Naive thymus-derived CD8-positive, alpha-beta T cell (primary cell): ENCODE measurements at regions of chr16 and their contacts with region 1.

Region 1: GRCh38 chr16:31507929-31508705 is at the start of gene RUSF1:
- DNase-seq: peak; percentile 67 to 89 (median 78)
- ATAC-seq: peak; percentile 89 to 93
- H3K4me3 Mint-ChIP-seq: peak within 1 kb of the TSS; percentile 90 to 97 (median 92)
- H3K27ac Mint-ChIP-seq: peak within 1 kb of the TSS; percentile 93 to 98 (median 98)
- H3K4me1 Mint-ChIP-seq: peaks cover 25 to 66% (median 57%) of the 10 kb centered on the region in 4 donors
- H3K27me3 Mint-ChIP-seq: no peaks in the 10 kb centered on the region
- polyA plus RNA-seq, gene RUSF1: 15.3 to 28.6 (median 22.3) TPM

Region 2: DNA sequence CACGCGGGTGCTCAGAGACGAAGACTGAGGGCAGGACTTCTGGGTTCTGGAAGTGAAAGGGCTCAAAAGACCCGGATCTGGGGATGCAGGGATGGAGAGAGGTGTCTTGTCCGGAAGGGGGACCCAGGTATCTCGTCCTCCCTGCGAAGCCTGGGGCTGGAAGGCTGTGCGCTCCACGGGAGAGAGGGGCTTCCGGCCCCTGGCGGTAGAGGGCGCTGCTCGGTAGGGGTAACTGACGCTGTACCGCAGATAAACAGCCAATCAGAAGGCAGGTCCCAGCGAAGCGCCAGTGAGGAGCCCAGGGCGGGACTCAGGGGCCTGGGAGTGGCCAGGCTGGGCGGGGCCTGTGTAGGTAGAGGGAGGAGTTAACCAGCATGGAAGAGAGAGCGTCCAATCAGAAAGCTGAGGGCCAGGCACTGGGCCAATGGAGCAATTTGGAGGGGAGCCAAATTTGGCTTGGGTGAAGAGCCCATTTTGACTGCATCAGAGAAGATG is 35.4 kb before region 1 on chr16:
- POLR2A ChIA-PET with region 1: interaction called, 24 read pairs
- DNase-seq: peak in 5 of 10 donors; percentile 20 to 63 (median 33)
- ATAC-seq: peak in 1 of 2 donors; percentile 38
- H3K4me3 Mint-ChIP-seq: peak overlapping the region in 9 of 10 donors; percentile 62 to 81 (median 77)
- H3K27ac Mint-ChIP-seq: peak overlapping the region in 3 of 10 donors; percentile 9 to 71 (median 61)
- H3K4me1 Mint-ChIP-seq: peaks cover 12 to 36% (median 25%) of the 10 kb centered on the region in 4 donors
- H3K27me3 Mint-ChIP-seq: peaks cover 1 to 19% (median 10%) of the 10 kb centered on the region in 5 donors

Region 3: DNA sequence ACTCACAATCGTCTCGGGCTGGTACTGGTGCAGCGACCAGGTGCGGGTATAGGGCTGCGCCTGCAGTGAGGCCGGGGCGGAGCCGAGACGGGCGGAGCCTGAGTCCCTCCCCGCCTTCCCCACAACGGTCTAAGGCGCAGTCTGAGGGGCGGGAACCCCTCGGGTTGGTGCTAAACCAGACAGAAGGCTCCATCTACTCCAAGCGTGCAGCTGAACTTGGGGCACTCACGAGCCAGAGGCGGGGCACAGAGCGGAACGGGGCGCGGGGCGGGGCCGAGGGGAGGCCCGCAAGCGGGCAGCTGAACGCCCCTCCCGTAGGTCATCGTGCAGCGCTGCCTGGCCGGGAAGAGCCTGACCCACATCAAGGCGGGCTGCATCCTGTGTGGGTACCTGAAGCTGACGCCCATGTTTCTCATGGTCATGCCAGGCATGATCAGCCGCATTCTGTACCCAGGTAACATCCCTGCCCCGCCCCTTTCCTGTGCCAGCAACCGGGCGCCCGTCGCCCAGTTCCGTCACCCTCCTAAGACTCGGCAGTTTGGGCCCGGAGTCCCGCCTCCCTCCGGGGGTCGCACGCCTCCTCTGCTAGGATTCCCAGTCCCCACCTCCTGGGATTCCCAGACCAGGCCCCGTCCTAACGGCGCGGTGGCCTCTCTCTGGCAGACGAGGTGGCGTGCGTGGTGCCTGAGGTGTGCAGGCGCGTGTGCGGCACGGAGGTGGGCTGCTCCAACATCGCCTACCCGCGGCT is 20.2 kb before region 1 on chr16:
- POLR2A ChIA-PET with region 1: interaction called, 23 read pairs
- DNase-seq: peak; percentile 53 to 88 (median 76)
- ATAC-seq: peak; percentile 88 to 90
- H3K4me3 Mint-ChIP-seq: peak overlapping the region; percentile 88 to 95 (median 92)
- H3K27ac Mint-ChIP-seq: peak overlapping the region; percentile 46 to 90 (median 86)
- H3K4me1 Mint-ChIP-seq: peaks cover 2 to 24% (median 18%) of the 10 kb centered on the region in 4 donors
- H3K27me3 Mint-ChIP-seq: no peaks in the 10 kb centered on the region

Region 4: DNA sequence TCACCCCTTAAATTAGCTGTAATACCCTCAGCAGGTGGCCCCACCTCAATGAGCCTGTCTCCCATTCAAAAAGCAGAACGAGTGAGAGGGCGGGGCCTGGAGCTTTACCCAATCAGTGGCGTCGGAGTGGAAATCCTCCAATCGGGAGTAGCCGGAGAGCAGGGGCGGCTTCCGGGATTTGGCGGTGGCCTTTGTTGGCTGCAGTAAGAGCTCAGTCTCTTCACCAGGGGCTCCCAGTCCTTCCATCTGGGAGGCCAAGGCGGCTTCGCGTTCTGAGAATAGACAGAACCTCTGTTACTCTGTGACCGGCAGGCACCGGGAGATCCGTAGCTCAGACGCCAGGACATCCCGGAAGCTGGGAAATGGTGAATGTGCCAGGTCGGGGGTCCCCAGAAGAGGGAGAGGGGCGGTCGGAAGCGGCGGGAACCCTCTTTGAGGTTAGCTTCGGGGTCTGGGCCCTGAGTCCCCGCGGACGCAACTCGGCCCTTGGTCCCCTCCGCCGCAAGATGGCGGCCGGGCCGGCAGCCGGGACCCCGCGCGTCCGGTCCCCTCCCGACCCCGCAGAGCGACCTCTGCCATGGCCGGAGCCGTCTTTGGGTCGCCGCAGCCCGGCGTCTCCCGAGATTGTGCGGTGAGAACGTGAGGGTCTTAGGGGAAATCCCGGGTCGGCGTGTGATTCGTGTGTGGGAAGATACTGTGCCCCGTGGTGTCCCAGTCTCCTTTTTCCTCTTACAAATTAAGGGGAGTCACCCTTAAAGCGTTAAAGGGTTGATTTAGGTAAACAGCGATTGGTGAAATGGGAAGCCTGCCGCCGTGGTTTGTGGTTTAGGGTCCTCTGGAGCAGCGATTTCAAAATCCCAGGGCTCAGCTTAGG is 205.2 kb after region 1 on chr16:
- POLR2A ChIA-PET with region 1: interaction called, 11 read pairs
- DNase-seq: peak; percentile 76 to 95 (median 90)
- ATAC-seq: peak; percentile 86 to 92
- H3K4me3 Mint-ChIP-seq: peak overlapping the region; percentile 98 to 100 (median 99)
- H3K27ac Mint-ChIP-seq: peak overlapping the region; percentile 83 to 99 (median 99)
- H3K4me1 Mint-ChIP-seq: peaks cover 43 to 79% (median 67%) of the 10 kb centered on the region in 4 donors
- H3K27me3 Mint-ChIP-seq: no peaks in the 10 kb centered on the region

Region 5: DNA sequence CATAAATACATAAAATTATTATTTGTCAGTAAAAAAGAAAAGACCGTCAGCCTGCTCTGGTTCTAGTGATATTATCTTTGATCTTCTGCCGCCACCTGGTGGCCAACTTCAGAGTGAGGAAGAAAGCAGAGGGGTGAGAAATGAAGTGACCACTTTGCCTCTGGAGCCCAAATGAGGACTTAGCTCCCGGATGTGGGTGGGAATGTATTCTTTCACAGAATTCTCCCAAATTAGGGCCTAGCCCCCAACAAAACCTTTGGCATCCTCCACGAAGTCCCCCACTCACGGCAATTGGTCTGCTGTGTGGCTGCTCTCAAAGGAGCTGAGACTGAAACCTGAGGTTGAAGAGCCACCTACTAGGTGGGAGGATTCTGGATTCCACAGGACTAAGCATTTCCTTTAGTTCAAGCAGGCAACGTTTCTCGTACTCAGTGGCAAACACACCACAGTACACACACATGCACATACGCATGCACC is 360.6 kb after region 1 on chr16:
- POLR2A ChIA-PET with region 1: interaction called, 11 read pairs
- DNase-seq: peak; percentile 61 to 88 (median 77)
- ATAC-seq: peak; percentile 26 to 40
- H3K4me3 Mint-ChIP-seq: peak overlapping the region; percentile 64 to 87 (median 71)
- H3K27ac Mint-ChIP-seq: peak overlapping the region; percentile 59 to 96 (median 88)
- H3K4me1 Mint-ChIP-seq: peaks cover 11 to 58% (median 38%) of the 10 kb centered on the region in 4 donors
- H3K27me3 Mint-ChIP-seq: no peaks in the 10 kb centered on the region

Region 6: DNA sequence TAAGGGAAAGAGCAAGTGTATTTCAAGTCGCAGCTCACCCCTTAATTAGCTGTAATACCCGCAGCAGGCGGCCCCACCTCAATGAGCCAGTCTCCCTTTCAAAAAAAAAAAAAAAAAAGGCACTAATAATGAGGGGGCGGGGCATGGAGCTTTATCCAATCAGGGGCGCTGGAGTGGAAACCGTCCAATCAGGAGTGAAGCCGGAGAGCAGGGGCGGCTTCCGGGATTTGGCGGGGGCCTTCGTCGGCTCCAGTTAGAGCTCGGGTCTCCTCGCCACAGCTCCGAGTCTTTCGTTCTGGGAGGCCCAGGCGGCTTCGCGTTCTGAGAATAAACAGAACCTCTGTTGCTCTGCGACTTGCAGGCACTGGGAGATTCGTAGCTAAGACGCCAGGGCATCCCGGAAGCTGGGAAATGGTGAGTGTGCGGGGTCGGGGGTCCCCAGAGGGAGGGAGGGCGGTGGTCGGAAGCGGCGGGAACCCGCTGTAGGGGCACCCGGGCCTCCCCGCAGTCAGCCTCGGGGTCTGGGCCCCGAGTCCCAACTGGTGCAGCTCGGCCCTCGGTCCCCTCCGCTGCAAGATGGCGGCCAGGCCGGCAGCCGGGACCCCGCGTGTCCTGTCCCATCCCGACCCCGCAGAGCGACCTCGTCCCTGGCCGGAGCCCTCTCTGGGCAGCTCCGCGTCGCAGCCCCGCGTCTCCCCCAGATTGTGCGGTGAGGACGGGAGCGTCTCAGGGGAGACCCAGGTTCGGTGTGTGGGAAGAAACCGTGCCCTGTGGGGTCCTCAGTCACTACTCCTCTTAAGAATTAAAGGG is 365.6 kb after region 1 on chr16 and contains the start of gene ZNF267:
- POLR2A ChIA-PET with region 1: interaction called, 11 read pairs
- DNase-seq: peak; percentile 84 to 98 (median 92)
- ATAC-seq: peak; percentile 72 to 73
- H3K4me3 Mint-ChIP-seq: peak within 1 kb of the TSS; percentile 94 to 100 (median 96)
- H3K27ac Mint-ChIP-seq: peak within 1 kb of the TSS; percentile 93 to 99 (median 97)
- H3K4me1 Mint-ChIP-seq: peaks cover 31 to 86% (median 78%) of the 10 kb centered on the region in 4 donors
- H3K27me3 Mint-ChIP-seq: no peaks in the 10 kb centered on the region
- polyA plus RNA-seq, gene ZNF267: 7.3 to 8.1 (median 8.0) TPM